CD8-positive, alpha-beta T cell (primary cell): ENCODE measurements at regions of chr1 and their contacts with region 1.

Region 1: DNA sequence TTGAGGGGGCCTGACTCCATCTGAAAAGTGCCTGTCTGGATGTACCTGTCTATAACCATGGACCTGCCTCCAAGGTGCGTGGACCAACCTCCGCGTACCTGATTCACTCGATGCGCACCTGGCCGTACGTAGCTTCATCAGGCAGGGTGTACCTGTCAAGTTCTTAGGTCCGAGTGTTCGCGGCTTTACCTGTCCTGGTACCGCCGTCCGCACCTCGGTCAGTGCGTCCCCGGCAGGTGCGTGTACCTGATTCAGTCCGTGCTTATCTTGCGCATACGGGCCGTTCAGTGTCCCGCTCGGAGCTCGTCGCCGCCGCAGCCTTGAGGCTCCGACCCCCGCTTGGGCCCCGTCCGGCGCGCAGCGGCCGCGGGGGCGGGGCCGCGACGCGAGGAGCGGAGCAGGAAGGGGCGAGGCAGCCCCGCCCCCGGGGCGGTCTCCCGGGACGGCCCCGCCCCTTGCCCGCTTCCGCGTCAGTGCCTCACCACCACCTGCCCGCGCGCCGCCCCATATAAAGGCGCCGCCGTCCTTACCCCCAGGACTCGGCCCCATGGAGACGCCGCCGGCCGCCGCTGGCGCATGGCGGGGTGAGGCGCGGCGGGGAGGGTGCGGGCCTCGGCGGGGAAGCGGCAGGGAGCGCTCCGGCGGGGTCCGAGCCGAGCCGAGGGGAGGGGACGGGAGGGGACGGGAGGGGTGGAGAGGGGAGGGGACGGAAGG is at the start of gene ZC3H12A:
- DNase-seq: peak; percentile 86 to 97 (median 92)
- ATAC-seq: peak; percentile 57
- H3K4me3 ChIP-seq: peak within 1 kb of the TSS; percentile 93 to 95
- H3K4me3 Mint-ChIP-seq: peak within 1 kb of the TSS; percentile 95
- H3K27ac ChIP-seq: peak within 1 kb of the TSS; percentile 95 to 99
- H3K27ac Mint-ChIP-seq: peak within 1 kb of the TSS; percentile 99
- H3K4me1 ChIP-seq: peaks cover 43% of the 10 kb centered on the region
- H3K4me1 Mint-ChIP-seq: peaks cover 59% of the 10 kb centered on the region
- H3K27me3 ChIP-seq: no peaks in the 10 kb centered on the region
- H3K27me3 Mint-ChIP-seq: no peaks in the 10 kb centered on the region
- CTCF ChIP-seq: no peak
- total RNA-seq, gene ZC3H12A: 202 to 205 TPM

Region 2: DNA sequence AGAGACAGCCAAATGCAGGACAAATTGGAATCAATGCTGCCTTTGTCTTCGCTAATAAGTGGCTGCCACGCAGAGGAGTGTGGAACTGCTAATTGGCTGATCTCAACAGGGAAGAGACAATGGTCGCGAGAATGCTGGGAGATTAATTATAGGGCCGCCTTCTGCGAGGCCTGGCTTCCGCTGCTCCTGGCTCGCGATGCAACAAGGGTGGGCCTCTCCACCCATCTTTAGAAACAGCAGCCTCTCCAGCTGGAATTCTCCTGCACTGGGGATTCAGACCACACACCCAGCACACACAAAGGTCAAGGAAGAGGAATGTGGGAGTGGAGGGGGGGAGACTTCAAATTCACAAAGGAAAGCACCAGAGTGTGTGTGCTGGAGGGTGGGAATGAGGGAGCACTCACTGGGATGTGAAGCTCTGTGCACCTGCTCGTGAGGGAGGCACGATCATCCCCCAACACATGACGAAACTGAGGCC is 239.2 kb before region 1 on chr1:
- CTCF ChIA-PET with region 1: no interaction called
- POLR2A ChIA-PET with region 1: no interaction called
- intact Hi-C with region 1: no loop called
- DNase-seq: no peak
- ATAC-seq: no peak
- H3K4me3 ChIP-seq: no peak overlapping the region
- H3K4me3 Mint-ChIP-seq: no peak overlapping the region
- H3K27ac ChIP-seq: no peak overlapping the region
- H3K27ac Mint-ChIP-seq: no peak overlapping the region
- H3K4me1 ChIP-seq: no peaks in the 10 kb centered on the region
- H3K4me1 Mint-ChIP-seq: no peaks in the 10 kb centered on the region
- H3K27me3 ChIP-seq: no peaks in the 10 kb centered on the region
- H3K27me3 Mint-ChIP-seq: peaks cover 35% of the 10 kb centered on the region
- CTCF ChIP-seq: no peak

Region 3: DNA sequence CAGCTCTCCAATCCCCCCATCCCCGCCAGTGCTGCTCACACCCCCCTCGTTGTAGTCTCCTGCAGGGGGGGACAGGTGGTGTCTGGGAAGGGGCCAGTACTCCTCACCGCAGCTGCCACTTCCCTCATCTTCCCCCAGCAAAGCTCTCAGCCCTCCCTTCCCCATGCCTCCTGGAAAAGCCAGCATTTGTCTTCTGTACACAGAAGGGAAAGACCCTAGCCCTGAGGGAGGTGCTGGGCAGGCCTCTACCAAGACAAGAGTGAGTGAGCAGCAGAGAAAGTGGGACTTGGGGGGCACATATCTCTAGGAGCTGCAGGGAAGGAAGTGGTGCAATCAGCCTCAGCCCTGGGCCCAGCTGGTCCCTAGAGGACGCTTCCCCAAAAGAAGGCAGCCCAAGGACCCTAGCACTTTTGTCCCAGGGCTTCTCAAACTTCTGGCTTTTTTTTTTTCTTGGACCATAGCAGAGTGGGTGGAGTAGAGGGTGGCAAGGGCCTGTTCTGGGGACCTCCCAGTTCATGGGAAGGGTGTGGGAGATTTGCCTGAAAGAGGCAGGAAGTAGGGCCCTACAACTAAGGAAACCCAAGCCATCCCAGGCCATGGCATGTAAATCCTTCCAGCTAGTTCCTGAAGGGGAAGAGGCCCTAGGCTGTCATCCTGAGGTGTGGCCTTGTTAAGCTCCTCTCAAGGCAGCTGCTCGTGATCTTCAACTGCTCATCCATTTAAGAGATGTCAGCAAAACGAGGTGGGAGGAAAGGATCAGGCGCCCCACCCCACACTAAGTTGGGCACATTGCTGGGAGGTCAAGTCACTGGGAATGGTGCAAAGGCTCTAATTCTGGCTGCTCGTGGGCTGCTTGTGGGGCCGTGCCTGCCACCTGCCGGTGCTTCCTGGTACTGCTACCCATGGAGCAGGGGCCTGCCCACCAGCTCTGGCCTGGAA is 12.7 kb after region 1 on chr1:
- CTCF ChIA-PET with region 1: interaction called, 187 read pairs
- POLR2A ChIA-PET with region 1: interaction called, 66 read pairs
- intact Hi-C with region 1: loop called (anchors 1 to 2 kb)
- DNase-seq: peak; percentile 54 to 88 (median 82)
- ATAC-seq: peak; percentile 74
- H3K4me3 ChIP-seq: no peak overlapping the region
- H3K4me3 Mint-ChIP-seq: no peak overlapping the region
- H3K27ac ChIP-seq: peak overlapping the region in 1 of 2 experiments; percentile 17
- H3K27ac Mint-ChIP-seq: peak overlapping the region; percentile 71
- H3K4me1 ChIP-seq: peaks cover 11% of the 10 kb centered on the region
- H3K4me1 Mint-ChIP-seq: peaks cover 20% of the 10 kb centered on the region
- H3K27me3 ChIP-seq: no peaks in the 10 kb centered on the region
- H3K27me3 Mint-ChIP-seq: no peaks in the 10 kb centered on the region
- CTCF ChIP-seq: peak; percentile 94

Region 4: GRCh38 chr1:37553927-37554808 is 80.0 kb after region 1 on chr1 and contains the start of gene SNIP1:
- CTCF ChIA-PET with region 1: no interaction called
- POLR2A ChIA-PET with region 1: no interaction called
- intact Hi-C with region 1: loop called (anchors 2 to 5 kb)
- DNase-seq: peak; percentile 84 to 96 (median 91)
- ATAC-seq: peak; percentile 95
- H3K4me3 ChIP-seq: peak within 1 kb of the TSS; percentile 88 to 97
- H3K4me3 Mint-ChIP-seq: peak within 1 kb of the TSS; percentile 100
- H3K27ac ChIP-seq: peak within 1 kb of the TSS; percentile 88 to 91
- H3K27ac Mint-ChIP-seq: peak within 1 kb of the TSS; percentile 100
- H3K4me1 ChIP-seq: peaks cover 24% of the 10 kb centered on the region
- H3K4me1 Mint-ChIP-seq: peaks cover 43% of the 10 kb centered on the region
- H3K27me3 ChIP-seq: no peaks in the 10 kb centered on the region
- H3K27me3 Mint-ChIP-seq: peaks cover 2% of the 10 kb centered on the region
- CTCF ChIP-seq: no peak
- total RNA-seq, gene SNIP1: 71.7 to 84.2 TPM

Region 5: DNA sequence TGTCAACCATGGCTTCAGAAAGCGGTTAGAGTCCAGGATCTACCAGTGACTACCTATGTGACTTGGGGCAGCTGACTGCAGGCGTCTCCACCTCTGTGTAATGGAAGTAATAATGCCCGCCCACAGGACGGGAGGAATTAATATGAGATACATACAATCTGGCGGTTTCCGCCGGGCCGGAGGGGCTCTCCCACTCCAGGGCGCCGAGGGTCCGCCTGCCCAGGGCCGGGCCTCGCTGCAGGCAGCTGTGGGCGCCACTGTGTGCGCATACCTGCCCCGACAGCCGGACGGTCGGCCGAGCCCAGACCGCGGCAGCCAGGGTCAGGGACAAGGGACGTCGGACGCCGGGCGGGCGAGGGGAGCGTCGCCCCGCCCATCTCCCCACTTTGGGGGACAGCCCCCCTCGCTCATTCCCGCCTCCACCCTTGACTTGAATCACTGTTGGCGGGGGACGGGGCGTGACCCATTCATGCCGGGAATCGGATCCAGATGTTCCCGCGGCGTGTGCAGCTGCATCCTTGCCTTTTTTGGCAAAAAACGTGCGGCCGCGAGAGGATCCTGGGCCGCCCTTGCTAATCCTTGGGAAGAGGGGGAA is 521.6 kb after region 1 on chr1:
- CTCF ChIA-PET with region 1: no interaction called
- POLR2A ChIA-PET with region 1: no interaction called
- intact Hi-C with region 1: loop called in 1 of 2 experiments (anchors 5 kb)
- DNase-seq: peak in 3 of 9 experiments; percentile 24 to 60 (median 46)
- ATAC-seq: peak; percentile 45
- H3K4me3 ChIP-seq: peak overlapping the region in 1 of 2 experiments; percentile 48
- H3K4me3 Mint-ChIP-seq: peak overlapping the region; percentile 82
- H3K27ac ChIP-seq: peak overlapping the region in 1 of 2 experiments; percentile 7
- H3K27ac Mint-ChIP-seq: peak overlapping the region; percentile 55
- H3K4me1 ChIP-seq: peaks cover 28% of the 10 kb centered on the region
- H3K4me1 Mint-ChIP-seq: peaks cover 35% of the 10 kb centered on the region
- H3K27me3 ChIP-seq: no peaks in the 10 kb centered on the region
- H3K27me3 Mint-ChIP-seq: no peaks in the 10 kb centered on the region
- CTCF ChIP-seq: no peak

Region 6: GRCh38 chr1:38973659-38974424 is 1499.6 kb after region 1 on chr1:
- CTCF ChIA-PET with region 1: no interaction called
- POLR2A ChIA-PET with region 1: no interaction called
- intact Hi-C with region 1: loop called in 1 of 2 experiments (anchors 5 kb)
- DNase-seq: no peak
- ATAC-seq: no peak
- H3K4me3 ChIP-seq: no peak overlapping the region
- H3K4me3 Mint-ChIP-seq: no peak overlapping the region
- H3K27ac ChIP-seq: no peak overlapping the region
- H3K27ac Mint-ChIP-seq: no peak overlapping the region
- H3K4me1 ChIP-seq: peaks cover 9% of the 10 kb centered on the region
- H3K4me1 Mint-ChIP-seq: peaks cover 13% of the 10 kb centered on the region
- H3K27me3 ChIP-seq: no peaks in the 10 kb centered on the region
- H3K27me3 Mint-ChIP-seq: no peaks in the 10 kb centered on the region
- CTCF ChIP-seq: no peak